Esophagus squamous epithelium (tissue), 5 donors: ENCODE measurements at regions of chr22 and their contacts with region 1.

Region 1: DNA sequence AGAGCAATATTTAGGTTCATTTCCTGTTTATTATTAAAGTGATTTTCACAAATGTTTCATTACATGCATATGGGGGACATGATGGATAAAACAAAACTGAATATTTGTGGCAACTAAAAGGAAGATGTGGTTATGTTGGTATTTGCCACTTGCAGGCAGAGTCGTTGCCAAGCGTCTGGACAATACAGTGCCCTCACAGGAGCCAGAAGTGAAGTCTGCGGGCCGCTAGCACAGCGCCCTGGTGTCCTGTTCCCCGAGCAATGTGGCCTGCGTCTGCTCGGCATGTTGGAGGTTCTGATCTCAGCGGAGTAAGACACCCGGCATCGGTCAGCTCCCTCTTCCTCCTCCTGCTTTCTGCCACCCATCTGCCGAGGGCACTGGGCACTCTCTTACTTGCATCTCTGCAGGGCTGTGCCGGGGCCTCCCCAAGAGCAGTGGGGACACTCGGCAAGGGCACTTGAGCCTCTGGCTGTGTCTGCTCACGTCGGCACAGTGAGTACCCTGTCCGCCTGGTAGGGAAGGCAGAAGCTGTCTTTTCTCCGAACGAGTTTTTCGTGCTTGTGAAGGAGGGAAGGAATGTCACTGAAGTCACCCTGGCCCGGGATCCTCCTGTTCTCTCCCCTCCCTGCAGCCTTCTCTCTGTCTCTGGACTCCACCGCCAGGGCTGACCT is 10.5 kb upstream of the TTLL12 start:
- DNase-seq: no peak
- H3K4me3 ChIP-seq: no peak overlapping the region
- H3K27ac ChIP-seq: no peak overlapping the region
- H3K4me1 ChIP-seq: no peaks in the 10 kb centered on the region
- H3K27me3 ChIP-seq: peaks cover 0 to 25% (median 0%) of the 10 kb centered on the region in 4 donors
- CTCF ChIP-seq: no peak
- POLR2A ChIP-seq: no peak

Region 2: GRCh38 chr22:43136255-43136654 is 61.2 kb before region 1 on chr22:
- intact Hi-C with region 1: loop called (anchors 10 kb)
- DNase-seq: no peak
- H3K4me3 ChIP-seq: no peak overlapping the region
- H3K27ac ChIP-seq: peak overlapping the region in 3 of 4 donors; percentile 21 to 38 (median 36)
- H3K4me1 ChIP-seq: peaks cover 0 to 26% (median under 1%) of the 10 kb centered on the region in 3 donors
- H3K27me3 ChIP-seq: no peaks in the 10 kb centered on the region
- CTCF ChIP-seq: peak; percentile 27 to 54 (median 40)
- POLR2A ChIP-seq: no peak